SK-N-SH (cell line): ENCODE measurements at regions of chr1 and their contacts with region 1.

Region 1: DNA sequence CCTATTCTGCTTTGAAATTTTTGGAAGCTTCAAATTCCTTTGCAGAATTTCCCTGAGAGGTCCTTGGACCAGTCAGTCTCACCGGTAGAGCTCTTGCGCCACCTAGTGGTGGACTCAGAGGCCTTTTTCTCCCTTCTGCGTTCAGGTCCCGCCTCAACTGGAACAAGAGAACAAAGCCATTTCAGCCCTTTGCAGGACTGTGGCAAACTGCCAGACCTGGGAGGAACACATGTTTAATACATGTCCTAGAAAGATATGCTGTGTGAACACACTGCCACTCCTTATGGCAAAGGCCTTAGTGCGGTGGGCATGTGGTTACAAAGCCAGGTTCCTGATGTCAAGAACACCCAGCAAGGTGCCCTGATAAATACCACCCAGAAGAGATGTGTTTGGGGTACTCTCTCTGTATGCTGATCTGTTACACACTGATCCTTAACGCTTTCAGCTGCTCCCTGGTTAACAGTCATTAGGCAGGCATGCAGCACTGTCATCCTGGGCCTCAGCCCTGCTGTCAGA is 82.2 kb upstream of the SSX2IP start:
- DNase-seq: peak; percentile 78
- H3K4me3 ChIP-seq: no peak overlapping the region; a peak in 1 of 4 replicates
- H3K27ac ChIP-seq: no peak overlapping the region
- H3K4me1 ChIP-seq: peaks cover 0 to 5% of the 10 kb centered on the region in 2 experiments; a peak in 1 of 4 replicates
- H3K27me3 ChIP-seq: no peaks in the 10 kb centered on the region
- CTCF ChIP-seq: peak; percentile 96
- EP300 ChIP-seq: no peak
- RAD21 ChIP-seq: peak; percentile 96

Region 2: DNA sequence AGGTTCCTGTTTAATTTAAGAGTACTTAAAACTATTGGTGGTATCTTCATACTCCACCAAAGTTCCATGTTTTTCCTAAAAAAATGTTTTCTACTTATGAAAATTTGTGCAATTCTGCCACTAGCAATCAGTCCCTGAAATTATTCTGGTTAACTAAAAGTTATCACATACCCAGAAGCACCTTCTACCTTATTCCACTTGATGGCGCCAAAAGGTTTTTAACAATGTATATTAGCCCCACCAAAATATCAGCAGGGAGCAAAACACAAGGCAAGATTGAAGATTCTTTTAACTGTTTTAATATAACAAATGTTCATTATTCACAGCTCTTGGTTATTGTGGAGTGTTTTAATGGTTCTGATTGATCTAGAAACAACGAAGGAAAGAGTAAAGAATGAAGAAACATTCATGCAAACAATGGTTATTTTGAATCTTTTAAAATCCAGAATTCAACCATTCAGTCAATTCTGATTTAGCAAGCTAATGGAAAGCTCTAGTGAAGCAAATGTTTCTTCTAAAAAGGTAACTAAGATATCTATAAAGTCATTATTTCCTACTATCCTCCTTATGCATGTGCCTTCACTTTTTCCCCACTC is 840.7 kb before region 1 on chr1:
- CTCF ChIA-PET with region 1: interaction called, 10 read pairs
- POLR2A ChIA-PET with region 1: no interaction called
- DNase-seq: peak; percentile 49
- H3K4me3 ChIP-seq: no peak overlapping the region; a peak in 1 of 4 replicates
- H3K27ac ChIP-seq: no peak overlapping the region
- H3K4me1 ChIP-seq: no peaks in the 10 kb centered on the region
- H3K27me3 ChIP-seq: no peaks in the 10 kb centered on the region
- CTCF ChIP-seq: peak; percentile 89
- EP300 ChIP-seq: no peak
- RAD21 ChIP-seq: peak; percentile 92

Region 3: DNA sequence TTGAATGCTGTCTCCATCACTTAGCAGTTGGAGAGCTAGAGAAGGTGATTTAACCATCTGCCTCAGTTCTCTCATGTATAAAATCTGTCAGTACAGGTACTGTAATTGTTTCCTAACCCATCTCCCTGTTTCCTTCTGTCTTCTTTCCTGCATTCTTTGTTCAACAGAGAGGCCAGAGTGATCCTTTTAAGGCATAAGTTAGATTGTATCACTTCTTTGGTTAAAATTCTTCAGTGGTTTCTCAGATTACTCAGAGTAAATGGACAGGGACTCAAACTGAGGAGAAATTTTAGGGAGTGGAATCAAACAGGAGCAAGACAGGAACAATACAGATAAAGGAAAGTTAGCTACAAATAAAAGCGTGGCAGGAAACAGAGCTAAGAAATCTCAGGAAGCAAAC is 37.0 kb before region 1 on chr1:
- CTCF ChIA-PET with region 1: no interaction called
- POLR2A ChIA-PET with region 1: no interaction called
- DNase-seq: no peak
- H3K4me3 ChIP-seq: no peak overlapping the region
- H3K27ac ChIP-seq: peak overlapping the region; percentile 28 to 61; a peak in 2 of 4 replicates
- H3K4me1 ChIP-seq: no peaks in the 10 kb centered on the region; a peak in 2 of 4 replicates
- H3K27me3 ChIP-seq: no peaks in the 10 kb centered on the region
- CTCF ChIP-seq: no peak
- EP300 ChIP-seq: peak in 1 of 2 experiments; percentile 58; a peak in 1 of 4 replicates
- RAD21 ChIP-seq: no peak

Region 4: DNA sequence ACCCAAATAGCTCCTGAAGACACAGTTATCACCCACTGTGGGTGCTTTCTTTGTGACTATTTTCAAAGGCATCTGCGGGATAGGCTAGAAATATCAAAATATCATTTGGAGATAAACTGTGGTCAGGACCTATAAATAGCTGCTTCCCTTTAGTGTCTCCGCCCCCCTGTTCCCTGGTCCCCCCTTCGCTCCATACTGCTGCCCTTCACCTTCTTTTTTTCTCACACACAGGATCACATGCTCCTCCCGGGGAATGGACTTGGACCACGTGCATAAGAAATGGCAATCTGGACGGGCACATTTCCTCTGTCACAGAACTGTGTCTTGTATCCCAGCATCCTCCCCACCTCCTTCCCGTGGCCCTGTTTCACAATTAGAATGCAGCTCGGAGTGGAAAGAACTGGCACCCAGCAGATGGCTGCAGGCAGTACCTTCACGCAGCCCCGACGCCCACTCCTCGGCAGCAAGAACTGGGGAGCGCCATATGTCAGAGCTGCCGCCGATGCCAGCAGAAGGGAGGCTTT is 13.5 kb before region 1 on chr1:
- CTCF ChIA-PET with region 1: interaction called, 77 read pairs
- POLR2A ChIA-PET with region 1: no interaction called
- DNase-seq: no peak
- H3K4me3 ChIP-seq: no peak overlapping the region
- H3K27ac ChIP-seq: no peak overlapping the region
- H3K4me1 ChIP-seq: no peaks in the 10 kb centered on the region
- H3K27me3 ChIP-seq: no peaks in the 10 kb centered on the region
- CTCF ChIP-seq: no peak
- EP300 ChIP-seq: no peak
- RAD21 ChIP-seq: no peak

Region 5: GRCh38 chr1:84795966-84796600 is 23.6 kb after region 1 on chr1:
- CTCF ChIA-PET with region 1: interaction called, 10 read pairs
- POLR2A ChIA-PET with region 1: no interaction called
- DNase-seq: no peak
- H3K4me3 ChIP-seq: no peak overlapping the region
- H3K27ac ChIP-seq: no peak overlapping the region
- H3K4me1 ChIP-seq: no peaks in the 10 kb centered on the region
- H3K27me3 ChIP-seq: no peaks in the 10 kb centered on the region
- CTCF ChIP-seq: no peak
- EP300 ChIP-seq: no peak
- RAD21 ChIP-seq: no peak

Region 6: DNA sequence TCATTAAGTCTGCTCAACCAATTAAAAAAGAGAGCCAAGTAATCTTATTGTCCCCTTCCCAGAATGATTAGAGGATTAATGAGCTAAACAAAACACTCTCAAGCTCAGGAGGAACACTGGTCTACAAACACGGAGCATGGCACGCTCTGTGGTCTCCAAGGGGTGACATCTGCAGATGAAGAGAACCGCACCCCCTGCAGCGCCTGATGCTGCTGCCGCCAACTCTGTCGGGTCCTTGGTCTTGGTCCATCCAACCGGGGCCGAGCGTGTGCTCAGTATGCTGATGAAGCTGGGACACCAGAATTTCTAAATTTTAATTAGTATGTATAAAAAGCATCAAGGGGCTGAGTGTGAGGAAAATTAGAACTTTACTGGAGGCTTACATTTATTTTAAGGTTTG is 37.9 kb after region 1 on chr1:
- CTCF ChIA-PET with region 1: interaction called, 13 read pairs
- POLR2A ChIA-PET with region 1: no interaction called
- DNase-seq: no peak
- H3K4me3 ChIP-seq: no peak overlapping the region
- H3K27ac ChIP-seq: no peak overlapping the region
- H3K4me1 ChIP-seq: no peaks in the 10 kb centered on the region
- H3K27me3 ChIP-seq: peaks cover 15% of the 10 kb centered on the region; the same call in 1 of the 2 replicates
- CTCF ChIP-seq: no peak
- EP300 ChIP-seq: no peak
- RAD21 ChIP-seq: no peak

Region 7: GRCh38 chr1:84936116-84936810 is 163.8 kb after region 1 on chr1:
- CTCF ChIA-PET with region 1: interaction called, 41 read pairs
- POLR2A ChIA-PET with region 1: no interaction called
- DNase-seq: peak; percentile 62
- H3K4me3 ChIP-seq: peak overlapping the region in 1 of 2 experiments; percentile 44; a peak in 1 of 4 replicates
- H3K27ac ChIP-seq: no peak overlapping the region; a peak in 1 of 4 replicates
- H3K4me1 ChIP-seq: no peaks in the 10 kb centered on the region; a peak in 1 of 4 replicates
- H3K27me3 ChIP-seq: peaks cover 11% of the 10 kb centered on the region; the same call in 1 of the 2 replicates
- CTCF ChIP-seq: peak; percentile 94
- EP300 ChIP-seq: no peak
- RAD21 ChIP-seq: peak; percentile 97